Right ventricle myocardium superior (tissue), 1 donor: ENCODE measurements at regions of chr12 and their contacts with region 1.

Region 1: GRCh38 chr12:30695199-30696103 is at the start of gene IPO8:
- DNase-seq: peak; percentile 96
- ATAC-seq: peak; percentile 98
- total RNA-seq, gene IPO8: 23.0 TPM

Region 2: GRCh38 chr12:30417697-30418231 is 277.7 kb before region 1 on chr12:
- intact Hi-C with region 1: no loop called
- DNase-seq: no peak
- ATAC-seq: peak; percentile 77

Region 3: GRCh38 chr12:30754709-30755394 is 59.4 kb after region 1 on chr12 and contains the start of gene CAPRIN2:
- intact Hi-C with region 1: loop called (anchors 10 kb)
- DNase-seq: peak; percentile 98
- ATAC-seq: peak; percentile 99
- total RNA-seq, gene CAPRIN2: 21.2 TPM

Region 4: DNA sequence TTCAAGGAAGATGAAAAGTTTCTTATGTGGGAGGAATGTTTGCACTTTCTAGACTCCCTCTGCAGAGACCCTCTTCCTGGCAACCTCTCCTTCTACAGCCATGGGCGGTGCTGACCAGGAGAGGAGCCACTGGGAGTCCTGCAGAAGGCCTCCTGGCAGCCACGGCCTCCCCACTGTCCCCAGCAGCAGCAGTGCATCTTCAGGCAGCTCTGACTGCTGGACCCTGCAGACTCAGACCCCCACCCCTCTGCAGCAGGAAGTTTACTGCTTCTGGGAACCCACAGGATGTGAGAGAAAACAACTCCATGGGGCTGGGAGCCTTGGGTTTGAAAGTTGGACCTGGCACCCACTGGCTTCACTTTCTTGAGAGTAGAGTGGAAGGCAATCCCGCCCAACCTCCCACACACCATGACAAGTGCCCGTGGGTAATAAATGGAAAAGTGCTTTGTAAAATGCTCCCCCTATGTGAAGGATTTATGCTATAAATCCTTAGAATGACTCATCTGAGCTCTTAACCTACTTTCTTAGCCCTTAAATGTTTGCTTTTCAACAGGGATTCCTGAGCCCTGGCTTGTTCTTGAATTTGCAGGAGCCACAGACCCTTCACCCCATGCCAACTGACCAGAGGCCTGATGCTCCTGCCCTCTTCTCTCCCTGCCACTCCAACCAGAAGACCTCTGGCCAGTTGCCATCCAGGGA is 340.7 kb after region 1 on chr12:
- intact Hi-C with region 1: no loop called
- DNase-seq: no peak
- ATAC-seq: no peak